MCF 10A (cell line): ENCODE measurements at regions of chr5 and their contacts with region 1.

Region 1: GRCh38 chr5:138552700-138553099 is 9.7 kb upstream of the ETF1 start:
- DNase-seq: no peak
- H3K4me3 Mint-ChIP-seq: no peak overlapping the region
- H3K27ac Mint-ChIP-seq: no peak overlapping the region
- H3K4me1 Mint-ChIP-seq: peaks cover 10% of the 10 kb centered on the region
- H3K27me3 Mint-ChIP-seq: no peaks in the 10 kb centered on the region
- CTCF ChIP-seq: no peak

Region 2: GRCh38 chr5:138508963-138509362 is 43.7 kb before region 1 on chr5:
- CTCF ChIA-PET with region 1: interaction called, 124 read pairs
- POLR2A ChIA-PET with region 1: interaction called, 276 read pairs
- intact Hi-C with region 1: no loop called
- DNase-seq: no peak
- H3K4me3 Mint-ChIP-seq: no peak overlapping the region
- H3K27ac Mint-ChIP-seq: peak overlapping the region; percentile 80
- H3K4me1 Mint-ChIP-seq: peaks cover 41% of the 10 kb centered on the region
- H3K27me3 Mint-ChIP-seq: no peaks in the 10 kb centered on the region
- CTCF ChIP-seq: no peak

Region 3: GRCh38 chr5:138536665-138537315 is 15.9 kb before region 1 on chr5:
- CTCF ChIA-PET with region 1: interaction called, 14 read pairs
- POLR2A ChIA-PET with region 1: interaction called, 4 read pairs
- intact Hi-C with region 1: no loop called
- DNase-seq: no peak
- H3K4me3 Mint-ChIP-seq: no peak overlapping the region
- H3K27ac Mint-ChIP-seq: peak overlapping the region; percentile 66
- H3K4me1 Mint-ChIP-seq: peaks cover 44% of the 10 kb centered on the region
- H3K27me3 Mint-ChIP-seq: no peaks in the 10 kb centered on the region
- CTCF ChIP-seq: peak; percentile 33

Region 4: GRCh38 chr5:138565100-138565821 is 12.6 kb after region 1 on chr5:
- CTCF ChIA-PET with region 1: interaction called, 15 read pairs
- POLR2A ChIA-PET with region 1: interaction called, 13 read pairs
- intact Hi-C with region 1: no loop called
- DNase-seq: no peak
- H3K4me3 Mint-ChIP-seq: no peak overlapping the region
- H3K27ac Mint-ChIP-seq: no peak overlapping the region
- H3K4me1 Mint-ChIP-seq: peaks cover 29% of the 10 kb centered on the region
- H3K27me3 Mint-ChIP-seq: no peaks in the 10 kb centered on the region
- CTCF ChIP-seq: no peak

Region 5: GRCh38 chr5:138737494-138738265 is 185.0 kb after region 1 on chr5:
- CTCF ChIA-PET with region 1: no interaction called
- POLR2A ChIA-PET with region 1: no interaction called
- intact Hi-C with region 1: no loop called
- DNase-seq: peak; percentile 32
- H3K4me3 Mint-ChIP-seq: no peak overlapping the region
- H3K27ac Mint-ChIP-seq: no peak overlapping the region
- H3K4me1 Mint-ChIP-seq: peaks cover 24% of the 10 kb centered on the region
- H3K27me3 Mint-ChIP-seq: no peaks in the 10 kb centered on the region
- CTCF ChIP-seq: no peak